Heart left ventricle (tissue), 16 donors: ENCODE measurements at regions of chr17 and their contacts with region 1.

Region 1: DNA sequence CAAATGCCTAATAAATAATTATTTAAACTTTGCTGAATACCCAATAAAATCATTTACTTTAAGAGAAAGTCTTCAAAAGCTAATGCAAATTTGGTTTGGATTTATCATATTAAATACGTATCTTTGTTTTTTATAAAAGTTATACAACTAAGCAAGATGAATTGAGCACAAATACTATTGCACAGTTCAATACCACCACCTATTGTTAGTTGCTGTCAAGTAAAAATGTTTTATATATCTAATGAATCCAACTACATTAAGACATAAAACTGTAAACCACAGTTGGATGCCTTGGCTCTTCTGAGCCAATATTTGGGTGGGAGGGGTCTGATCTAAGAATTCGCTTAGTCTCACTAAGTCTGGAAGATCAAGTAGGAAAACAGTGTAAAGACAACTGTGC is 7.7 kb downstream of the FBXL20 start:
- DNase-seq: no peak
- ATAC-seq: peak in 2 of 4 donors; percentile 36 to 38
- H3K4me3 ChIP-seq: no peak overlapping the region
- H3K27ac ChIP-seq: no peak overlapping the region
- H3K4me1 ChIP-seq: peaks cover 0 to 30% (median 14%) of the 10 kb centered on the region in 12 donors
- H3K27me3 ChIP-seq: no peaks in the 10 kb centered on the region
- CTCF ChIP-seq: peak in 7 of 12 donors; percentile 10 to 47 (median 29)
- POLR2A ChIP-seq: no peak

Region 2: GRCh38 chr17:39306509-39307212 is 87.1 kb before region 1 on chr17:
- intact Hi-C with region 1: loop called in 1 of 10 experiments (anchors 10 kb)
- DNase-seq: no peak
- ATAC-seq: no peak
- H3K4me3 ChIP-seq: no peak overlapping the region
- H3K27ac ChIP-seq: peak overlapping the region in 7 of 12 donors; percentile 7 to 56 (median 32)
- H3K4me1 ChIP-seq: peaks cover 0 to 20% (median 15%) of the 10 kb centered on the region in 12 donors
- H3K27me3 ChIP-seq: no peaks in the 10 kb centered on the region
- CTCF ChIP-seq: no peak
- POLR2A ChIP-seq: no peak

Region 3: DNA sequence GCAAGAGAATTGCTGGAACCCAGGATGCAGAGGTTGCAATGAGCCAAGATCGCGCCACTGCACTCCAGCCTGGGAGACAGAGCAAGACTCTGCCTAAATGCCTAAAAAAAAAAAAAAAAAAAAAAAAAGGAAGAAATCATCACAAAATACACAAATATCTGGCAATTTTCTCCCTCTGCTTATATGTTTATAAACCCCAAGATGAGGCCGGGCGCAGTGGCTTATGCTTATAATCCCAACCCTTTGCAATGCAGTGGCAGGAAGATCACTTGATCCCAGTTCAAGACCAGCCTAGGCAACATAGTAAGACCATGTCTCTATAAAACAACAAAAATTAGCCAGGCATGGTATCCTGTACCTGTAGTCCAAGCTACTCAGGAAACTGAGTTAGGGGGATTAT is 35.9 kb after region 1 on chr17:
- intact Hi-C with region 1: no loop called
- DNase-seq: no peak
- ATAC-seq: no peak
- H3K4me3 ChIP-seq: no peak overlapping the region
- H3K27ac ChIP-seq: no peak overlapping the region
- H3K4me1 ChIP-seq: peaks cover 0 to 5% (median 0%) of the 10 kb centered on the region in 12 donors
- H3K27me3 ChIP-seq: no peaks in the 10 kb centered on the region
- CTCF ChIP-seq: no peak
- POLR2A ChIP-seq: no peak

Region 4: DNA sequence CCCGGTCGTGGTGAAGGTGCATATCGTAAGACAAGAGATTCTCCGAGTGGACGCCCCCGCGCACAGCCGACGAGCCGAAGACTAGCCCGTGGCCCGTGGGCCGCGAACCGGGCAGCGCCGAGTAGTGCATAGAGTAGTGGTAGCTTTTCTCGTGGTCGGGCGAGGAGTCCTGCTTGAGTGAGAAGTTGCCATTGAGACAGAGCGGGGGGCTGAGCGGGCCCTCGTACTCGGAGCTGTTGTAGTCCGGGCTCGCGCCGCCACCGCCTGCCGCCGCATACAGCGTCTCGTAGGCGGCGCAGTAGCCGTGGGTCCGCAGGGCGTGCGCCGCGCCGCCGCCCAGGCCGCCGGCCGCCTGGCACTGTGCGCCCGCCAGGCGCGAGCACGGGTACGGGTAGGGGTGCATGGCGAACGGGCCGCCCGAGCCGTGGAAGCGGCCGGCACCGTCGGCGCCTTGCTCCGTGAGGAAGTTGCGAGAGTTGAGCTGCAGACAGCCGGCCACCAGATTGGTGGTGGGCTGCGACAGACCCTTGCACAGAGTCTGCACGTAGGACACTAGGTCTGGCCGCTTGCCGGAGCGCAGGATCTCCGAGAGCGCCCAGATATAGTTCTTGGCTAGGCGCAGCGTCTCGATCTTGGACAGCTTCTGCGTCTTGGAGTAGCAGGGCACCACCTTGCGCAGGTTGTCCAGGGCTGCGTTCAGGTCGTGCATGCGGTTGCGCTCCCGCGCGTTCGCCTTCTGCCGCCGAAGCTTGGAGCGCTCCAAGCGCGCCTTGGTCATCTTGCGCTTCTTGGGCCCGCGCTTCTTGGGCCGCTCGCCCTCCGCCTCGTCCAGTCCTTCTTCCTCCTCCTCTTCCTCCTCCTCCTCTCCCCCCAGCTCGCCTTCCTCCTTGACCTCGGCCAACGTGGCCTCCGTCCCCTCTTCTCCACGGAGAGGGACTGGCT is 212.0 kb after region 1 on chr17:
- intact Hi-C with region 1: no loop called
- DNase-seq: no peak
- ATAC-seq: peak in 2 of 4 donors; percentile 37 to 55
- H3K4me3 ChIP-seq: peak overlapping the region in 9 of 12 donors; percentile 5 to 31 (median 23)
- H3K27ac ChIP-seq: no peak overlapping the region
- H3K4me1 ChIP-seq: peaks cover 4 to 43% (median 25%) of the 10 kb centered on the region in 12 donors
- H3K27me3 ChIP-seq: peaks cover 70 to 95% (median 87%) of the 10 kb centered on the region in 9 donors
- CTCF ChIP-seq: no peak
- POLR2A ChIP-seq: no peak